ENCODE measurements at regions of chr11 and their contacts with region 1.

Region 1: DNA sequence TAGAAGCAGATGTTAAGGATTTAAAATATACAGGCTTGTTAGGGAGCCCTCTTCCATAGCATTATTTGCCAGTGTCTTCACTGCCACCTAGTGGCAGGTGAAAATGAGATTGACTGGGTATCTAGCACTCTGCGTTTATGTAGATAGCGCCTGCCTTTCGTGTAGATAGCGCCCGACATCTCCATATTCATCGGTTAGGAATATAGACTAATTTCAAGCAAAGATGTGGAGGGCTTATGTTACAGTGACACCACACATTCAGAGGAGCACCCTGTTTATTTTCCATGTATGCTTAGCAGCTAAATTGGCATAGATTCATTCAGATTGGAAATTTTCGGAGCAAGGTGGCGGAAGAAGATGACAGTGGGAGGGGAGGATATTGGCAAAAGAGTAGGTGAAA is 72.0 kb downstream of the SLC5A12 start:
- DNase-seq: no peak
- ATAC-seq: no peak
- H3K4me3 Mint-ChIP-seq: no peak overlapping the region
- H3K27ac Mint-ChIP-seq: no peak overlapping the region
- H3K4me1 Mint-ChIP-seq: no peaks in the 10 kb centered on the region
- H3K27me3 Mint-ChIP-seq: no peaks in the 10 kb centered on the region
- CTCF ChIP-seq: peak; percentile 40

Region 2: GRCh38 chr11:26297189-26297975 is 352.5 kb before region 1 on chr11:
- CTCF ChIA-PET with region 1: interaction called, 3 read pairs
- POLR2A ChIA-PET with region 1: no interaction called
- intact Hi-C with region 1: loop called (anchors 1 kb)
- DNase-seq: no peak
- ATAC-seq: peak; percentile 28
- H3K4me3 Mint-ChIP-seq: no peak overlapping the region
- H3K27ac Mint-ChIP-seq: no peak overlapping the region
- H3K4me1 Mint-ChIP-seq: no peaks in the 10 kb centered on the region
- H3K27me3 Mint-ChIP-seq: peaks cover 2% of the 10 kb centered on the region
- CTCF ChIP-seq: peak; percentile 28

Measured in activated B cell treated with CpG ODN at 0.5 μM for 24 hours (primary cell).